SK-N-SH (cell line): ENCODE measurements at regions of chr14 and their contacts with region 1.

Region 1: DNA sequence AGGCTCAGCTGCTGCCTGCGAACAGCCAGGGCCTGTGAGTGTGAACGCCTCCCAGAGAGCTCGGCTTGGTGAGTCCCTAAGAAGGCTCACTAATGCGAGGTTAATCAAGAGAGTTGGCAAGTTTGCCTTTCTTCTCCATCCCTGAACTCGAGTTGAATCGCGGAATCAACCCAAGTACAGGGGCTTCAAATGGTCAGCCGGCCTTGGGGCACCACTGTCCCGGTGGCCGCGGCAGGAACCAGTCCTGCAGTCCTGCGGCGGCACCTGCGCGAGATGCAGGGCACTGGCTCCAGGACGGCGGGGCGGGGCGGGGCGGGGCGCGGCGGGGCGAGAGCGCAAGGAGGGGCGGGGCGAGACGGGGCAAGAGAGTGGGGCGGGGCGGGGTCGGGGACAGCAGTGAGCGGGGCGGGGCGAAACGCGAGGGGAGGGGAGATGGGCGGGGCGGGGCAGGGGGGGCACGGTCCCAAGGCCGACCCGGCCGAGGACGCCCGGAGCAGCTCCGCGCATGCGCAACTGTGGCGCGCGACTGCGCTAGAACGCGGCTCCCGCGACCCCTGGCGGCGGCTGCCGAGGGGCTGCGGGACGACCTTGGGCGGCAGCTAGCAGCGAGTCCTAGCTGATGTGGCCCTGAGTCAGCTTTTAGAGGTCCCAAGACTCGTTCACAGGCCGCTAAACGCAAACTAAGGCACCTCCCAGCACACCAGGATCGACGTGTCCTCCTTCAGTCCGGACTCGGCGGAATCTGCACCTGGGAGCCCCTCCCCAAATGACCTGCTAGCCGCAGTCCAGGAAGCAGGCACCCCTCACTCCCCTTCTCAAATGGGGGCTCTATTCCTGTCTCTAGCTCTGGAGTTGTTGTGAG is 58.0 kb downstream of the TTC7B start:
- DNase-seq: peak; percentile 100
- H3K4me3 ChIP-seq: peak overlapping the region; percentile 52 to 71
- H3K27ac ChIP-seq: peak overlapping the region; percentile 41 to 64; a peak in 3 of 4 replicates
- H3K4me1 ChIP-seq: peaks cover 9 to 21% of the 10 kb centered on the region in 2 experiments; a peak in 3 of 4 replicates
- H3K27me3 ChIP-seq: no peaks in the 10 kb centered on the region
- CTCF ChIP-seq: peak; percentile 74
- EP300 ChIP-seq: no peak
- RAD21 ChIP-seq: peak; percentile 86

Region 2: GRCh38 chr14:90368946-90369721 is 389.1 kb before region 1 on chr14:
- CTCF ChIA-PET with region 1: interaction called, 17 read pairs
- POLR2A ChIA-PET with region 1: interaction called, 3 read pairs
- DNase-seq: peak; percentile 34
- H3K4me3 ChIP-seq: no peak overlapping the region
- H3K27ac ChIP-seq: peak overlapping the region in 1 of 2 experiments; percentile 48; a peak in 1 of 4 replicates
- H3K4me1 ChIP-seq: peaks cover 0 to 4% of the 10 kb centered on the region in 2 experiments; a peak in 3 of 4 replicates
- H3K27me3 ChIP-seq: no peaks in the 10 kb centered on the region
- CTCF ChIP-seq: peak; percentile 27
- EP300 ChIP-seq: no peak
- RAD21 ChIP-seq: peak; percentile 57

Region 3: DNA sequence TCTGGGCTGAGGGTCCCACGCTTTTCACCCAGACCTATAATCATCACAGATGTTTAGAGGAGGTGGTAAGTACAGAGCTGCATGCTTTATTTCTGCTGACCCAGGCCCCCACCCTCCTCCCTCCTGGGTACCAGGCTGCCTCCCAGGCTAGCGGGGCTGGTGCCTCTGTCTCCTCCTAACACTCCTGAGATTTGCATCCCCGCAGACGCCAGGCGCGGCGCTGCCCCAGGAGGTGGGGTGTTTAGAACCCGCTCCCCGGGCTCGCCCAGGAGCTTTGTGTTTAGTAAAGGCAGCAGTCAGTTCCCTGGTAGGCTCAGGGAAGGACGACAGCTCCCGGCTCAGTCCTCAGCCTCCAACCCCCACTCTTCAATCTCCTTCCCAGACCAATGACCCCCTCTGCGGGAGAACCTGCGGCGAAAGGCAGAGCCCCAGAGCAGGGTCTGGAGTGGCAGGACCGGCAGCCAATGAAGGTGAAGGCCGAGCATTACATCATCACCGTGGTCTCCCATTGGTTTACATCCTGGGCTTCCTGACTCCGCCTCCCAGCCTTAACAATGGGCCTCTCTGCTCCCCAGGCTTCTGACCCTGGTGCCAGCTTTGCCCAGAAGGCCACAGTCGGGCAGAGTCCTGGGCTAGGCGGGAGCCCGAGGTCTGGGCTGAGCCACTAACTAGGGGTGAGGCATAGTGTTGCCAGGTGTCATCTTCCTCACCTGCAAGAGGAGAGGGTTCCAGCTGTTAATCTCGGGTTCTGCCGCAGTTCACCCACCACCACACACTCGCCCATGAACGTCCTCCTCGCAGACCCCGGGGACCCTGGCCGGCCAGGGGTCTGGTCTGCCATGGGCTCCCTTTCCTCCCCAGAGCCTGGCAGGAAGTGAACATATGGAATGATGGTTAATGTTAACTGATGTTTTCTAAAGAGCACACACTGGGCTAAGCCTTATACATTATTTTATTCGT is 303.9 kb before region 1 on chr14:
- CTCF ChIA-PET with region 1: interaction called, 11 read pairs
- POLR2A ChIA-PET with region 1: interaction called, 3 read pairs
- DNase-seq: peak; percentile 95
- H3K4me3 ChIP-seq: peak overlapping the region; percentile 51 to 57; a peak in 3 of 4 replicates
- H3K27ac ChIP-seq: peak overlapping the region; percentile 24 to 98; a peak in 3 of 4 replicates
- H3K4me1 ChIP-seq: peaks cover 0 to 72% of the 10 kb centered on the region in 2 experiments; a peak in 2 of 4 replicates
- H3K27me3 ChIP-seq: no peaks in the 10 kb centered on the region
- CTCF ChIP-seq: no peak
- EP300 ChIP-seq: 0 out of 4 replicates have a peak, but pooled peaks of 1 of the 2 experiments have one; percentile 57
- RAD21 ChIP-seq: peak; percentile 37; the same call in 1 of the 2 replicates

Region 4: GRCh38 chr14:90703841-90704737 is 54.2 kb before region 1 on chr14:
- CTCF ChIA-PET with region 1: interaction called, 51 read pairs
- POLR2A ChIA-PET with region 1: no interaction called
- DNase-seq: no peak
- H3K4me3 ChIP-seq: no peak overlapping the region
- H3K27ac ChIP-seq: no peak overlapping the region
- H3K4me1 ChIP-seq: peaks cover 3 to 7% of the 10 kb centered on the region in 2 experiments; a peak in 3 of 4 replicates
- H3K27me3 ChIP-seq: no peaks in the 10 kb centered on the region
- CTCF ChIP-seq: no peak
- EP300 ChIP-seq: no peak
- RAD21 ChIP-seq: no peak

Region 5: DNA sequence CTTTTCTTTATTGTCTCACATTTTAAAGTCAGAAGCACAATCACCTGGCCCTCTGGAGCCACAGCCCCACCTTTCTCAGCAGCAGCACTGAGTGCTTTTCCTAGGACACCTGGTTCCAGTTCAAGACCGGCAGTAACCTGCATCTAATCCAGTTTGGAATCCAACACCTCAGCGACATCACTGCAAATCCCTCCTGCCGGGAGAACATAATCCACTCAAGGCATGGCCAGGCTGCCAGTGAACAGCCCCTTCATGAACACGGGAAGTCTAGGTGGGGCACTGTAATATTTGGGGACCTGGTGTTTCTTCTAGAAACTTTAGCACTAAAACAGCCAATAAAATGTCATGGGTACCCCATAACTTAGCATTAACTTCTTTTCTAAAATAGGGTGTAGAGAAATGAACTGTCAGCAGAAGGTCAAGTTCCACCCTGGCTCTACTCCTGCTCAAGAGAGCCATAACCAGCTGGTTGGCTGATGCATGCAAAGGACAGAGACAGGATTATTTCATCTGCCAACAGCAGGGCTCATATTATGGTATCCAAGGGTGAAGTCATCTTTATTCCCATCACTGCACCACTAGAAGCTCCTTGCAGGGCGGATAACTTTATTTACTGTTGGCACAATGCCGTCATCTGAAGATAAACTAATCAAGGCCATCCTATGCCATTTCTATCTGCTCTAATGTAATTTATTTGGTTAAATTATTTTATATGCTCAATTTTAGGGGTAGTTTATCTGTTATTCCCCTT is 18.8 kb before region 1 on chr14:
- CTCF ChIA-PET with region 1: interaction called, 28 read pairs
- POLR2A ChIA-PET with region 1: interaction called, 3 read pairs
- DNase-seq: peak; percentile 73
- H3K4me3 ChIP-seq: no peak overlapping the region
- H3K27ac ChIP-seq: peak overlapping the region; percentile 7 to 81; a peak in 3 of 4 replicates
- H3K4me1 ChIP-seq: peaks cover 0 to 21% of the 10 kb centered on the region in 2 experiments; a peak in 2 of 4 replicates
- H3K27me3 ChIP-seq: no peaks in the 10 kb centered on the region
- CTCF ChIP-seq: no peak
- EP300 ChIP-seq: peak in 1 of 2 experiments; percentile 40; a peak in 1 of 4 replicates
- RAD21 ChIP-seq: peak; percentile 11; the same call in 1 of the 2 replicates

Region 6: DNA sequence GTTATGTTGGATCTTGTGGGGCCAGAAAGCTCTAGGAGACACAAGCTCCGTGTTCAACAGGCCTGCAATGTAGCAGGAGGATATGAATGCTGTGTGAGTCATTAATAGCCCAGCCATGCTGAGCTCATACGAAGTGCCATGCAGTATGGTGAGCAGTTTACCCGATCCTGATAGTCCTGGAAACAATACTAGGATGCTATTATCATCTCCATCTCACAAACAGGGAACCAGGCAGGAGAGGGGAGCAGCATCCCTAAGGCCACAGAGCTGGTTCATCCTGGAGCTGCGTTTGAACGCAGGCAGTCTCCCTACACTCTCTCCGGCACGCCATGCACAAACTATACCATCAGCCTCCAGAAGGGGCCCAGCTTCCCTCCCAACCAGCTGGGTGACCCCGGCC is 37.5 kb after region 1 on chr14:
- CTCF ChIA-PET with region 1: interaction called, 19 read pairs
- POLR2A ChIA-PET with region 1: no interaction called
- DNase-seq: peak; percentile 70
- H3K4me3 ChIP-seq: 0 out of 4 replicates have a peak overlapping the region, but pooled peaks of 1 of the 2 experiments have one; percentile 3
- H3K27ac ChIP-seq: peak overlapping the region; percentile 79
- H3K4me1 ChIP-seq: peaks cover 15 to 25% of the 10 kb centered on the region in 2 experiments
- H3K27me3 ChIP-seq: no peaks in the 10 kb centered on the region
- CTCF ChIP-seq: no peak
- EP300 ChIP-seq: no peak
- RAD21 ChIP-seq: no peak

Region 7: DNA sequence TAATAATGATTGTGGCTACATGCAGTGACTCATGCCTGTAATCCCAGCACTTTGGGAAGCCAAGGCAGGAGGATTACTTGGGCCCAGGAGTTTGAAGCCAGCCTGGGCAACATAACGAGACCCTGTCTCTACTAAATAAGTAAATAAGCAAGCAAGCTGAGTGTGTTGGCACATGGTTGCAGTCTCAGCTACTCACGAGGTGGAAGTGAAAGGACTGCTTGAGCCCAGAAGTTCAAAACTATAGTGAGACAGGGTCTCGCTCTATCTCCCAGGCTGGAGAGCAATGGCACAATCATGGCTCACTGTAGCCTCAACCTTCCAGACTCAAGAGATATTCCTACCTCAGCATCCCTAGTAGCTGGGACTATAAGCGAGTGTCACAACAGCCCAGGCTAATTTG is 237.5 kb after region 1 on chr14:
- CTCF ChIA-PET with region 1: no interaction called
- POLR2A ChIA-PET with region 1: no interaction called
- DNase-seq: no peak
- H3K4me3 ChIP-seq: no peak overlapping the region
- H3K27ac ChIP-seq: no peak overlapping the region
- H3K4me1 ChIP-seq: no peaks in the 10 kb centered on the region
- H3K27me3 ChIP-seq: no peaks in the 10 kb centered on the region
- CTCF ChIP-seq: no peak
- EP300 ChIP-seq: no peak
- RAD21 ChIP-seq: no peak